ENCODE measurements at regions of chr4 and their contacts with region 1.

Region 1: GRCh38 chr4:22427675-22428074 is 88.2 kb downstream of the ADGRA3 start:
- DNase-seq: no peak
- CTCF ChIP-seq: no peak

Region 2: DNA sequence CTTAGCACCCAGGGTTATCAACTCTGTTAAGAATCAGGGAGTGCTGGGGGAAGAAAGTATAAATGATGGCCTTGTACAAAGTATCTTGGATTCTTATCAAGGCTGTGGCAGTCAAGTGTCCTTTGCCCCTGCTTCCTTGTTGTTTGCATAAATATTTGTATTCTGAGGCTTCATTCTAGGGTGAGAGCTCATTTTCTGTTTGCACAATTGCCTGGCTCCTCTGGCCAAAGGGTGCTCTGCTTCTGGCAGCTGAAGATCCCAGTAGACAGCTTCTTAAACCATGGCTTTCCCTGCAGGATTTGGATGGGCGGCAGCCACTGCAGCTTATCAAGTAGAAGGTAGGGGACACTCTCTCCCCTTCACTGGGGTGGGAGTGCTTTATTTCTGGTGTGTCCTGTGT is 265.1 kb after region 1 on chr4 and contains the start of gene GBA3:
- in situ Hi-C with region 1: loop called (anchors 10 kb)
- DNase-seq: no peak
- CTCF ChIP-seq: no peak

Measured in GM13977 (cell line).